ENCODE measurements at regions of chrX and their contacts with region 1.

Region 1: DNA sequence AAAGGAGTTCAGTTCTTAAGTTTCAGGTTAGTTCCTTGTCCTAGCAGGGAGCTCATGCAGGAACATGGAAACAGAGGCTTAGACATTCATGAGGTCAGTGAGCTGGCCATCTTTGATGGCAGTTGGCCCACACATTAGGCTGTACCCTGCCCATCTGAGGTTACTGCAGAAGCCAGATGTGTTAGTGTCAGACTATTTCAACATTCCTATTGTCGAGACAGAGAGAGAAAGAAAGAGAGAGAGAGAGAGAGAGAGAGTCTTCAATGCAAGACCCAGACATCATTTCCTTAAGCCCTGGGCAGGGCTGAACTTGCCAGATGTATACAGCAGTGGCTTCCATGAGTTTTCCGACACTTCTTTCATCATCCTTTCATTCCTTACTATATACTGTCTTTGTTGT is 91.3 kb downstream of the PPP1R2C start:
- DNase-seq: no peak
- H3K4me3 Mint-ChIP-seq: no peak overlapping the region
- H3K27ac Mint-ChIP-seq: no peak overlapping the region
- H3K4me1 Mint-ChIP-seq: no peaks in the 10 kb centered on the region
- H3K27me3 Mint-ChIP-seq: no peaks in the 10 kb centered on the region

Region 2: DNA sequence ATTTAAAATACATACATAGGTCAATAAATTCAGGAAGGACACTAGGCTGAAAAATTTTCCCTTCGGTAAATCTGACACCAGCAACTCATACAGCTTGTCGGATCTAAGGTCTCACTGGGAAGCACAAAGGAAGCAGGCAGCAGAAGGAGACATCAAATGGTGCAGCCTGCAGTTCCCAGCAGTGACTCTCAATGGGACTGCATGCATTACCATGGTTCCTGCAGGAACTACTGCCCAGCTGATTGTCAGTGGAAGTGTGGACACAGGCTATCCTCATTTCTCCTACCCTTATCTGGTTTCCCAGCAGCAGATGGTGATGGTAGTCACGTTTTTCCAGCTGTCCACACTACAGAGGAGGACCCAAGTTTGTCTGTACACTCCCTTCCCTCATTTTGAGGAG is 22.0 kb before region 1 on chrX:
- CTCF ChIA-PET with region 1: no interaction called
- POLR2A ChIA-PET with region 1: no interaction called
- intact Hi-C with region 1: loop called (anchors 1 kb)
- DNase-seq: no peak
- H3K4me3 Mint-ChIP-seq: no peak overlapping the region
- H3K27ac Mint-ChIP-seq: no peak overlapping the region
- H3K4me1 Mint-ChIP-seq: no peaks in the 10 kb centered on the region
- H3K27me3 Mint-ChIP-seq: no peaks in the 10 kb centered on the region

Measured in activated CD4-positive, alpha-beta memory T cell treated with anti-CD3 and anti-CD28 coated beads for 36 hours (primary cell).